ENCODE measurements at regions of chr12 and their contacts with region 1.

Region 1: DNA sequence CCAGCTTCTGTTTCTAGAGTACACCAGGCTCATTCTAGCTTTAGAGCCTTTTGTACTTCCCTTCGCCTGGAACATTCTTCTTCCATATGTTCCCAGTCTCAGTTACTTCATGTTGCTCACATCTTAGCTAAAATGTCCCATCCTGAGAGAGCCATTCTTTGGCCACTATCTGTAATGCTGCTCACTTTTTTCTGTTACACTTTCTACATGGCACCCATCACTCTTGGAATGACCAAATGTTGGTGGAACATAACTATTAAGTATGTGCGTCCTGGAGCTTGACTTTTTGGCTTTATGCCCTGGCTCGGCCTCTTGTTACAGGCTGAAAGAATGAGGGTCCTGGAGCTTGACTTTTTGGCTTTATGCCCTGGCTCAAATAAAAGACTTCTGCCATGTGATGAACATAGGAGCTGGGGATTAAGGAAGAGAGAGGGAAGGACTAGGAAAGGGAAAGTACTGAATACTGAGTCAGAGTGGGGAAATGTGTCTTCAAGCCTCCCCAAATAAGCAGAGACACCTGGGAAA is 442.9 kb upstream of the ATP2B1 start:
- DNase-seq: no peak
- H3K4me3 Mint-ChIP-seq: no peak overlapping the region
- H3K27ac Mint-ChIP-seq: no peak overlapping the region
- H3K4me1 Mint-ChIP-seq: peaks cover 1% of the 10 kb centered on the region
- H3K27me3 Mint-ChIP-seq: no peaks in the 10 kb centered on the region

Region 2: GRCh38 chr12:89648211-89648930 is 503.2 kb before region 1 on chr12:
- intact Hi-C with region 1: no loop called
- DNase-seq: no peak
- H3K4me3 Mint-ChIP-seq: no peak overlapping the region
- H3K27ac Mint-ChIP-seq: no peak overlapping the region
- H3K4me1 Mint-ChIP-seq: peaks cover 2% of the 10 kb centered on the region
- H3K27me3 Mint-ChIP-seq: no peaks in the 10 kb centered on the region

Region 3: DNA sequence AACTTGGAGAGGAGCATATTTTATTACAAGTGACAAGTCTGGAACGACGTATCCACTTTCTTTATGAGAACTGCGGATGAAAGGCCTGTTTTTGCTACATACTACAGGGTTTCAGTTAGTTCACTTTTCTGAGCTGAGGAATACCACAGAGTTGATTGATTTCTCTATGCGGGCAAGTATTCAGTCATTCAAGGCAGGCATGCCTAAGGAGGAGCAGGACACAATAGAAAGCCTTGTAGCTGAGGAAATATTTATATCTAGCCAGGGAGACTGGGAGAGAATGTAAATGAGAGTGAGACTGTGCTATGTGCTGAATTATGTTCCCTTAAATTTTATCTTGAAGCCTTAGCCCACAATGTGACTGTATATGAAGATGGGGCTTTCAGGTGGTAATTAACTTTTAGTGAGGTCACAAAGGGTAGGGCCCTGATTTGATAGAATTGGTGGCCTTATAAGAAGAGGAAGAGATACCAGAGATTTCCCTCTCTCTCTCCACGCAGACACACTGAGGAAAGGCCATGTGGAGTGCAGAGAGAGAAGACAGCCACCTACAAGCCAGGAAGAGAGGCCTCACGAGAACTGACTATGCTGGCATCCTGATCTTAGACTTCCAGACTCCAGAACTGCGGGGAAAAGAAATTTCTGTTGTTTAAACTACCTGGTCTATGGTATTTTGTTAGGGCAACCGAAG is 16.1 kb after region 1 on chr12:
- intact Hi-C with region 1: loop called (anchors 2 kb)
- DNase-seq: no peak
- H3K4me3 Mint-ChIP-seq: no peak overlapping the region
- H3K27ac Mint-ChIP-seq: no peak overlapping the region
- H3K4me1 Mint-ChIP-seq: no peaks in the 10 kb centered on the region
- H3K27me3 Mint-ChIP-seq: no peaks in the 10 kb centered on the region

Measured in activated T-helper 2 cell treated with anti-CD3 and anti-CD28 coated beads, Interferon-gamma antibody, Interleukin-2, Interleukin-4, amounts not matched to agents 10 μg/mL and 5 μg/mL and 100 μg/mL, durations not matched to agents 14 hours and 24 hours and 36 hours (primary cell).